ENCODE measurements at regions of chr1 and their contacts with region 1.

Region 1: GRCh38 chr1:116110567-116111523 is at the start of gene MAB21L3:
- DNase-seq: peak; percentile 54
- ATAC-seq: peak; percentile 74
- H3K4me3 ChIP-seq: peak within 1 kb of the TSS; percentile 55 to 76 (median 65)
- H3K27ac ChIP-seq: peak within 1 kb of the TSS; percentile 61
- H3K4me1 ChIP-seq: peaks cover 90% of the 10 kb centered on the region
- H3K27me3 ChIP-seq: no peaks in the 10 kb centered on the region
- CTCF ChIP-seq: no peak
- EP300 ChIP-seq: no peak
- POLR2A ChIP-seq: no peak
- RAD21 ChIP-seq: no peak
- total RNA-seq, gene MAB21L3: 0.55 and 0.90 TPM in 2 replicates

Region 2: GRCh38 chr1:116122955-116123757 is 12.3 kb after region 1 on chr1:
- CTCF ChIA-PET with region 1: no interaction called
- POLR2A ChIA-PET with region 1: interaction called, 18 read pairs
- in situ Hi-C with region 1: no loop called
- intact Hi-C with region 1: no loop called
- DNase-seq: peak; percentile 90
- ATAC-seq: peak; percentile 100
- H3K4me3 ChIP-seq: 0 out of 6 replicates have a peak overlapping the region, but pooled peaks of 1 of the 3 experiments have one; percentile 1
- H3K27ac ChIP-seq: peak overlapping the region; percentile 55
- H3K4me1 ChIP-seq: peaks cover 42% of the 10 kb centered on the region
- H3K27me3 ChIP-seq: no peaks in the 10 kb centered on the region
- CTCF ChIP-seq: no peak
- EP300 ChIP-seq: peak in 1 of 2 experiments; percentile 84; a peak in 2 of 4 replicates
- POLR2A ChIP-seq: no peak
- RAD21 ChIP-seq: no peak

Measured in HepG2 (cell line).